Activated B cell treated with CpG ODN at 0.5 μM for 24 hours (primary cell): ENCODE measurements at regions of chr4 and their contacts with region 1.

Region 1: DNA sequence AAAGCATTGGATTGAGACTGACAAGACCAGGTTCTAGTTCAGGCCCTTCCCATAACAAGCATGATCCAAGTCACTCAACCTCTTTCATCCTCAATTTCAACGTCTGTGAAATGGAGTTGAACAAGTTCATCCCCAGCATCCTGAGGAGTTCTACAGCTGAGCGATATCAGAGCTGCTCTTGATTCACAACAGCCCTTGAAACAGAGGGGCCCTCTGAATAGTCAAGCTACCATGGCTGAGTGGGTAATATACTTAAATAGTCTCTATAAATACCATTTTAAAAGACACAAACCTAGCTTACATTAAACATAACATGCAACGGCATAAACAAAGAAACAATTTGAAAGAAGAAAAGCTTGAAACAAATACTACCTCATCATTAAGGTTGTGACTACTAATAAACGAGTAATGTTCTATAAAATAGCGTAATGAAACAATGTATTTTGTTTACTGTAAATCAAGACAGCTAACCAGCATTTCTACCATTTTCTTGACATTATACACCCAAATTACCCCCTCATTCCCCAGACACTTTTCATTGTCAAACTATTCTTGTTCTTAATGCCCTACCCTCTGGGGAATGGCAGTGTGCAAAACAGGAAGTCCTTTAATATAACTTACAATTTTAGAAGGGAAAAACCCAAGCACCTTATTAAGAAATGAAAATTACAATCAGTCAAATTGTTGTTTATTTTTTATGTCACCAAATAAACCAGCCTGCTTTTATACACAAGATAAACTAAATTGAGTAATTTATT is 202.3 kb downstream of the PARM1 start:
- DNase-seq: no peak
- ATAC-seq: peak; percentile 93
- H3K4me3 Mint-ChIP-seq: peak overlapping the region; percentile 6
- H3K27ac Mint-ChIP-seq: peak overlapping the region; percentile 54
- H3K4me1 Mint-ChIP-seq: peaks cover 44% of the 10 kb centered on the region
- H3K27me3 Mint-ChIP-seq: no peaks in the 10 kb centered on the region
- CTCF ChIP-seq: no peak

Region 2: GRCh38 chr4:74982546-74983252 is 152.5 kb before region 1 on chr4:
- CTCF ChIA-PET with region 1: no interaction called
- POLR2A ChIA-PET with region 1: no interaction called
- intact Hi-C with region 1: no loop called
- DNase-seq: no peak
- ATAC-seq: no peak
- H3K4me3 Mint-ChIP-seq: no peak overlapping the region
- H3K27ac Mint-ChIP-seq: no peak overlapping the region
- H3K4me1 Mint-ChIP-seq: no peaks in the 10 kb centered on the region
- H3K27me3 Mint-ChIP-seq: no peaks in the 10 kb centered on the region
- CTCF ChIP-seq: no peak

Region 3: DNA sequence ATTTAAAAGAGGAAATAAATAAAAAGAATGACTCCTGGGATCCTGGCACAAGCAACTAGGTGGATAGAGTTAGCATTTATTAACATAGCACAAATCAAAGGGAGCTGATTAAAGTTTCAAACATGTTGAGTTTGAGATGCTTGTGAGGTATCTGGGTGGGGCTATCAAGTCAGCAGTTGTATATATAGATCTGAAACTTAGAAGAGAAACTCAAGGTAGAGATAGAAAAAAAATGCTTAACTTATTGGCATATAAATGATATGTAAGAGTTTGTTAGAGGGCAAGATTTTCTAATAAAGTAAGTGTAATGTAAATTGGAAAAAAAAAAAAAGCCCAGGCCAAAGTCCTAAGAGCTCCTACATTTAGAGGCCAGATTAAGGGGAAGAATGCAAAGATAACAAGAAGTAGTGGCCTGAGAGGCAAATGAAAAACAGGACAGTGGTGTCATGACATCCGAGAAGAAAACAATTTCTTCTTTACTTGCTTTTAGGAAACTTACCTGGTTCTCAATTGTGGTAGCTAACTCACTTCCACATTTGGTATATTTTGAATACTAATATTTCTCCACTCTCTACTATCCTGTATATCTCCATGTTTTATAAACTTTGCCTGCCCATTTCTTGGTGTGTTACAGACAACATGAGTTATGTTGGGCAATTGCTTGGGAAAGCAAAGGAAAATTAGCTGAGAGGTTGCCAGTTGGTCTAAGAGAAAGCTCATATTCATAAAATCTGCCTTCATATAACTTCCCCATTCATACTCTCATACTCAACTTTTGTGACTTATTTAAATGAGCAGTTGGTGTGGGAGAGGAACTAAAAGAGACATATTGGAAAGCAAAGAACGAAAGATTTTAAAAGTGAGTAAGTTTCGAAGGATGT is 33.1 kb before region 1 on chr4:
- CTCF ChIA-PET with region 1: no interaction called
- POLR2A ChIA-PET with region 1: interaction called, 3 read pairs
- intact Hi-C with region 1: loop called (anchors 1 kb)
- DNase-seq: no peak
- ATAC-seq: peak; percentile 56
- H3K4me3 Mint-ChIP-seq: peak overlapping the region; percentile 49
- H3K27ac Mint-ChIP-seq: peak overlapping the region; percentile 87
- H3K4me1 Mint-ChIP-seq: peaks cover 58% of the 10 kb centered on the region
- H3K27me3 Mint-ChIP-seq: no peaks in the 10 kb centered on the region
- CTCF ChIP-seq: no peak

Region 4: DNA sequence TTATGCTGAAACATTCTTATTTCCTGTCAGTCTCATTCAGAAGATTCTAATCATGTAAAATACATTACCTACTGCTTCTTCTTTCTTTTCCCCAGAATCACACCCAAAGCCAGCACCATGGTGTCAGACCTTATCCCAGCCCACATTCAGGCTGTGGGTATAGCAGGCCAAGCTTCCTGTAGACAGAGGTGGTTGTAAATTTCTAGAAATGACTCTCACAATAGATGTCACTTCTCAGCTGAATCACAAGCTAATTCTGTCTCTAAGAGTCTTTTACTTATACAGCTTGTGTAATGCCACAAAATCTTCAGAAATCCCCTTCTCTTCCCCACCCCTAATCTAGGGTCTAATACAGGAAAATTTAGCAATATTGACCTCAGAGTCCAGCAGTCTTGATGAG is 37.3 kb after region 1 on chr4:
- CTCF ChIA-PET with region 1: no interaction called
- POLR2A ChIA-PET with region 1: interaction called, 3 read pairs
- intact Hi-C with region 1: loop called (anchors 2 kb)
- DNase-seq: no peak
- ATAC-seq: peak; percentile 89
- H3K4me3 Mint-ChIP-seq: no peak overlapping the region
- H3K27ac Mint-ChIP-seq: peak overlapping the region; percentile 54
- H3K4me1 Mint-ChIP-seq: peaks cover 17% of the 10 kb centered on the region
- H3K27me3 Mint-ChIP-seq: no peaks in the 10 kb centered on the region
- CTCF ChIP-seq: no peak